Breast epithelium (tissue), 4 donors: ENCODE measurements at regions of chrX and their contacts with region 1.

Region 1: GRCh38 chrX:145552643-145553042 is 265.0 kb upstream of the SLITRK2 start:
- DNase-seq: no peak
- H3K4me3 ChIP-seq: no peak overlapping the region
- H3K27ac ChIP-seq: no peak overlapping the region
- H3K4me1 ChIP-seq: no peaks in the 10 kb centered on the region
- H3K27me3 ChIP-seq: no peaks in the 10 kb centered on the region
- CTCF ChIP-seq: no peak
- POLR2A ChIP-seq: no peak

Region 2: GRCh38 chrX:145410622-145411021 is 142.0 kb before region 1 on chrX:
- intact Hi-C with region 1: no loop called
- DNase-seq: no peak
- H3K4me3 ChIP-seq: no peak overlapping the region
- H3K27ac ChIP-seq: no peak overlapping the region
- H3K4me1 ChIP-seq: no peaks in the 10 kb centered on the region
- H3K27me3 ChIP-seq: peaks cover 0 to 3% of the 10 kb centered on the region in 2 donors
- CTCF ChIP-seq: no peak
- POLR2A ChIP-seq: no peak

Region 3: GRCh38 chrX:145484740-145485139 is 67.9 kb before region 1 on chrX:
- intact Hi-C with region 1: no loop called
- DNase-seq: no peak
- H3K4me3 ChIP-seq: no peak overlapping the region
- H3K27ac ChIP-seq: no peak overlapping the region
- H3K4me1 ChIP-seq: no peaks in the 10 kb centered on the region
- H3K27me3 ChIP-seq: peaks cover 0 to 3% of the 10 kb centered on the region in 2 donors
- CTCF ChIP-seq: no peak
- POLR2A ChIP-seq: no peak

Region 4: GRCh38 chrX:146396409-146396808 is 843.8 kb after region 1 on chrX:
- intact Hi-C with region 1: loop called (anchors 5 kb)
- DNase-seq: no peak
- H3K4me3 ChIP-seq: no peak overlapping the region
- H3K27ac ChIP-seq: no peak overlapping the region
- H3K4me1 ChIP-seq: no peaks in the 10 kb centered on the region
- H3K27me3 ChIP-seq: no peaks in the 10 kb centered on the region
- CTCF ChIP-seq: no peak
- POLR2A ChIP-seq: no peak